ENCODE measurements at regions of chr3 and their contacts with region 1.

Region 1: DNA sequence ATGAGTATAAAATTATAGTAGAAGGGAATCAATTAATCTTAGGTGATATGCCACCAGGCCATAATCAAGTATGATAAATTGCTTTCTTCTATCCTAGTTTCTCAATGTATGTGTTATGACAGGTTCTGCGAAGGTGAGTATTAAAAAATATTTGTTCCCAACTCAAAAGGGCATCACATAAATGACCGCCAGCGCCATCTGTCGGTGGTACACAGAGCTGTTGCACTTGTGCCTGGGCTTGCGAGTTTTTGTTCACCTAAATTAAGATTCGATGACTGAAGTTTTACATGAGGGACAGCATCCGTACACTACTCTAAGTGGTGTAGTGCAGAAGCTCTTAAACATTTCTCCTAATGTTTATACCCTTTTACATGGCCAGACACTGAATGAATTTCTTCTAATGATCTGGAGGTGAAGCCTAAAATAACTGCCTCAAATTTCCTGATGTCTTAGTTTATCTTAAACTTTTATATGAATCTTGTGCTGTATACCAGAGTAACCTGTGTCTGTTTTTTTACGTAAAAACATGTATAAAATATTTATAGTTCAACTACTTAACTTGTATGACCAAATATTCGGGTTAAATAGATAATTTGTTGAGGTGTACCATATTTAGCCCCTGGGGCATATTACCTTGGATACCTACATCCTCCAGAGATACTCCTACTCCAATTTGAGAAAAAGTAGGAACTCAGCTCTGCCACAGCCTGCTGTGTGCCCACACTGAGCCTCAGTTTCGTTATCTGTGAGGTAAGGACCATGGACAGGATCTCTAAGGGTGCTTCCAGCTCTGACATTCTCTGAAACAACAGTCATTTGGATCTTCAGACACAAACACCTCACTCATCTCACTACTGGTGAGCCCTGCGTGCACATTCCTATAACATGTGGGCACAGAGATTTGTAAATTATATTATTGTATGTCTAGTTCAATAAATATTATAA is 365.6 kb downstream of the MAGI1 start:
- DNase-seq: peak; percentile 29 to 78
- H3K4me3 ChIP-seq: no peak overlapping the region
- H3K27ac ChIP-seq: no peak overlapping the region
- H3K4me1 ChIP-seq: peaks cover 0 to 5% (median 1%) of the 10 kb centered on the region in 4 experiments; a peak in 2 of 7 replicates
- H3K27me3 ChIP-seq: no peaks in the 10 kb centered on the region
- CTCF ChIP-seq: peak; percentile 70 to 90 (median 77)
- EP300 ChIP-seq: no peak
- POLR2A ChIP-seq: no peak
- RAD21 ChIP-seq: peak; percentile 72 to 79

Region 2: GRCh38 chr3:65642883-65643282 is 30.3 kb before region 1 on chr3:
- CTCF ChIA-PET with region 1: interaction called, 26 read pairs
- POLR2A ChIA-PET with region 1: no interaction called
- DNase-seq: no peak
- H3K4me3 ChIP-seq: no peak overlapping the region
- H3K27ac ChIP-seq: no peak overlapping the region
- H3K4me1 ChIP-seq: 0 out of 7 replicates have a peak, but pooled peaks cover 0 to 3% (median 0%) of the 10 kb centered on the region in 4 experiments
- H3K27me3 ChIP-seq: no peaks in the 10 kb centered on the region
- CTCF ChIP-seq: no peak
- EP300 ChIP-seq: no peak
- POLR2A ChIP-seq: no peak
- RAD21 ChIP-seq: no peak

Region 3: GRCh38 chr3:65685621-65686235 is 12.6 kb after region 1 on chr3:
- CTCF ChIA-PET with region 1: interaction called, 13 read pairs
- POLR2A ChIA-PET with region 1: interaction called, 3 read pairs
- DNase-seq: no peak
- H3K4me3 ChIP-seq: no peak overlapping the region
- H3K27ac ChIP-seq: no peak overlapping the region
- H3K4me1 ChIP-seq: no peaks in the 10 kb centered on the region
- H3K27me3 ChIP-seq: peaks cover 0 to 1% (median 0%) of the 10 kb centered on the region in 4 experiments; a peak in 1 of 7 replicates
- CTCF ChIP-seq: no peak
- EP300 ChIP-seq: no peak
- POLR2A ChIP-seq: no peak
- RAD21 ChIP-seq: no peak

Measured in H1 (cell line).